Activated T-helper 1 cell treated with anti-CD3 and anti-CD28 coated beads, Interleukin-12 subunit alpha, Interleukin-12 subunit beta, Interleukin-2, Interleukin-4 antibody, amounts not matched to agents 30 ng/mL and 10 ng/mL and 1 ng/mL, durations not matched to agents 14 hours and 24 hours and 36 hours (primary cell): ENCODE measurements at regions of chr17 and their contacts with region 1.

Region 1: GRCh38 chr17:68205251-68205807 is 42.5 kb upstream of the AMZ2 start:
- DNase-seq: peak; percentile 90
- H3K4me3 Mint-ChIP-seq: peak overlapping the region; percentile 90
- H3K27ac Mint-ChIP-seq: peak overlapping the region; percentile 75
- H3K4me1 Mint-ChIP-seq: peaks cover 33% of the 10 kb centered on the region
- H3K27me3 Mint-ChIP-seq: peaks cover 12% of the 10 kb centered on the region

Region 2: DNA sequence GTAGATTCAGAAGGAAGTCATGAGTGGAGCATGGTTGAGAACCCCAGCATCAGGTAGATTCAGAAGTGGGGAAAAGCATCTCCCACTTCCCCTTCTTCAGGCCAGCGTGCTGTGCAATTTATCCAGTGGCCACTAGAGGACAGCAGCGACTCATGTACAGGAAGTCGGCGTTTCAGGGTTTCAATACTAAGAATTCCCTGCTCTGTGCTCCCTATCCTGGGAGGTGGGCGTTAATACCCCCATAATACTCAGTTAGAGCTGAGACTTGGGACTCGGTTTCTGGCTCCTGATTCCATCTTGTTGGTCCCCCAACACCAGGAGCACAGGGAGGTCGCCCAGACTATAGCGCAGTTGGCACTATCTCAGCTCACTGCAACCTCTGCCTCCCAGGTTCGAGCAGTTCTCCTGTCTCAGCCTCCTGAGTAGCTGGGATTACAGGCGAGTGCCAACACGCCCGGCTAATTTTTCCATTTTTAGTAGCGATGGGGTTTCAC is 32.8 kb before region 1 on chr17:
- intact Hi-C with region 1: loop called (anchors 1 kb)
- DNase-seq: peak; percentile 61
- H3K4me3 Mint-ChIP-seq: no peak overlapping the region
- H3K27ac Mint-ChIP-seq: no peak overlapping the region
- H3K4me1 Mint-ChIP-seq: peaks cover 31% of the 10 kb centered on the region
- H3K27me3 Mint-ChIP-seq: peaks cover 6% of the 10 kb centered on the region

Region 3: DNA sequence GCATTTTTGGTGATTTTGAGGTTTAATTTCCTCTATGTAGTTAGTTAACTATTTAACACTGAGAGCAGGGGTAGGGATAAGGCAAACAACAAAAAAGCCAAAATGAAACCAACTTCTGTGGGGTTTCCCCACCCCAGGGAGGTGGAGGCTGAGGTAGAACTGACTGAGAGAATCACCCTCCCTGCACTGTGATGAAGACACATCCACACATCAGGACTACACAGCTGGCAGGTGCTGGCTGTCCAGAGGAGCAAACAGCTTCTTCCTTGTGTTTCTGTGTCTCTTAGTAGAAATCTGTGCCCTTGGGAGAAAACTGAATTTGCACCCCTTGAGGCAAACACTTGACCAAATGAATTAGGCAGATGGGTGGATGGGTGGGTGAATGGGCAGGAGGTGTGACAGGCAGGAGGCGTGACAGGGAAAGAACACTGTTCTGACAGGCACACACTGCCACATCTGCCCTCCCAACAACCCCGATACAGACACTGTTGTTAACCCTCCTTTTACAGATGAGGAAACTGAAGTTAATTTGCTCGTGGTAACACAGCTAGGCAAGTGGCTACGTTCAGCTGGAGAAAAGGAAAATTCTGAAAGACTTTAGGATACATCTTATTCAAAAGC is 20.4 kb before region 1 on chr17:
- intact Hi-C with region 1: loop called (anchors 1 kb)
- DNase-seq: peak; percentile 70
- H3K4me3 Mint-ChIP-seq: peak overlapping the region; percentile 51
- H3K27ac Mint-ChIP-seq: peak overlapping the region; percentile 53
- H3K4me1 Mint-ChIP-seq: peaks cover 57% of the 10 kb centered on the region
- H3K27me3 Mint-ChIP-seq: peaks cover 10% of the 10 kb centered on the region

Region 4: DNA sequence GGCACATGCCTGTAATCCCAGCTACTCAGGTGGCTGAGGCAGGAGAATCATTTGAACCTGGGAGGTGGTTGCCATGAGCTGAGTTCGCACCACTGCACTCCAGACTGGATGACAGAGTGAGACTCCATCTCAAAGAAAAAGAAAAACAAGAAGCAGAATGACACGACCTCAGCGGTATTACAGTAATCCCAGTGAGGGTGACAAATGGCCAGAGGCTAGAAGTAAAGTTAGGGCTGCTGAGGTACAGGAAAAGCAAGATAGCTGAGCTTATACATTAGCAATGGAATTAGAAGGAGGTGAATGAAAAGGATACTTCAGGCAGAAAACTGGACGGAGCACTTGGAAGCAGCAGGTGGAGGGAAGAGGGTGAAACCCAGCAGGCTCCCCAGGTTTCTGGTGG is 16.4 kb after region 1 on chr17:
- intact Hi-C with region 1: no loop called
- DNase-seq: no peak
- H3K4me3 Mint-ChIP-seq: no peak overlapping the region
- H3K27ac Mint-ChIP-seq: no peak overlapping the region
- H3K4me1 Mint-ChIP-seq: no peaks in the 10 kb centered on the region
- H3K27me3 Mint-ChIP-seq: no peaks in the 10 kb centered on the region

Region 5: DNA sequence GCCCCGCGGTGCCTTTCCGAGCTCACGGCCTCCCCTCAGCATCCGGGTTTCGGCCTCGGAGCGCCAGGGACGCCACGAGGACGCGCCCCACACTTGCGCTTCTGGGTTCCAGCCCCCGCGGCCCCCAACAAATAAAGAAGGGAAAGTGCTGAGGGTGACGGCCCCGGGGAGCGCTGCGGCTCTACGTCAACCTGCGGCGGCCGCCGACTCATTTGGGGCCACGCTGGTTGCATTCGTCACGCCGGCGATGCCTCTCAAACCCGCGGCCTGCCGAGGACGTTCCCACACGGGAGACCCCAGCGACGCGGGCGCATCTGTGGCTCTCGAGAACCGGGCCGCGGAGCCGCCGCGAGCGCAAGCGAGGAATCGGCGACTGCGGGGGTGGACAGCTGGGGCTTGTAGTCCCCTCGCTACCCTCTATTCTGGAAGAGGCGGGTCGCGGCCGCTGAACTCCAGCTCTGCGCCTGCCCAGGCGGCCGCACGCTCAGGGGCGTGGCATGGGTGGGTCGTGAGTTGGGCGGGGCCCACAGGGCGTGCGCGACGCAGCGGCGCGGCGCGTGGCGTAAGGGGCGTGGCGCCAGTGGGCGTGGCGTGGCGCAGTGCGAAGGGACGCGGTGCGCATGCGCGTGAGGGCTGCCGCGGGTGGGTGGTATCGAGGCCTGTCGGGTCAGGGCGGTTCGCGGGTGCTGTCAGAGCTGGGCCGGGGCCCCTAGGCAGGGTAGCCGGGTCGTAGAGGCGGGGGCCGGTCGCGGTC is 42.3 kb after region 1 on chr17 and contains the start of gene AMZ2:
- intact Hi-C with region 1: loop called (anchors 2 kb)
- DNase-seq: peak; percentile 98
- H3K4me3 Mint-ChIP-seq: peak within 1 kb of the TSS; percentile 88
- H3K27ac Mint-ChIP-seq: peak within 1 kb of the TSS; percentile 96
- H3K4me1 Mint-ChIP-seq: peaks cover 49% of the 10 kb centered on the region
- H3K27me3 Mint-ChIP-seq: no peaks in the 10 kb centered on the region
- total RNA-seq, gene AMZ2: 67.3 and 75.7 TPM in 2 replicates

Region 6: DNA sequence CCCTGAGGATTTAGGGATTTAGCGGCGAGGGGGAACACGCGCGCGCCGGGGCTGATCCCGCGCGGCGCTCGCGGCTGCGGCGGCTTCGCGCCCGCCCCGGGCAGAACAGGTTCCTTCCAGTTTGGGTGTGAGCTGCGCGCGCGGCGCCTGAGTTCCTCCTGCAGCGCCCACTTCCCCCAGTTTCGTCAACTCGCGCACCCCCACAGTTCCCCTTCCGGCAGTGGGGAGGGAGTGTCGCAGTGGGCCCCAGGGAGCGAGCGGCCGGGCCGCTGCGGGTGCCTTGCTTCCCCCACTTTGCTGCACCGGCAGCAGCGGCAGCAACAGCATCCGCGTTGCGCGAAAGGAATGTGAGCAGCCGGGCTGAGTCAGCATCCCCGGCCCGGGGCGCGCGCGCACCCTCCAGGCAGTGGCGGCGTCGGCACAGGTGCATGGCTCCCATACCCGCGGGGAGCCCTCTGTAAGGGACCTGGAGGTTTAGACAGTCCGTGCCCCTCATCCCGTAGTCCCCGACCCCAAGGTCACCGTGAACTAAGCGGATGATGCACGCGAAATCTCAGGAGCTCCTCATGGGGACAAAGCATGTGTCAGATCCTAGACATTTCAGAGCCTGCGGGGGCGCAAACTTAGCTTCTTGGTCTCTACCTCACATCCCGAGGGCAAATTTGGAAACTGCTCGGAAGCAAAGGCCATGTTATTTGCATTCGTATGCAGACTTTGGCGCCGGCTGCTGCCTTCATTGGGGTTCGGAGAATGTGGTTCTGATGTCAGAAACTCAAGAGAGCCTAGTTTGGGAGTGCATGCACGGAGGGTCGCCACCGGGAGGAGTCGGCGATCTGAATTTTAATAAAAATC is 86.7 kb after region 1 on chr17:
- intact Hi-C with region 1: loop called (anchors 2 kb)
- DNase-seq: peak; percentile 90
- H3K4me3 Mint-ChIP-seq: peak overlapping the region; percentile 83
- H3K27ac Mint-ChIP-seq: peak overlapping the region; percentile 84
- H3K4me1 Mint-ChIP-seq: peaks cover 67% of the 10 kb centered on the region
- H3K27me3 Mint-ChIP-seq: peaks cover 8% of the 10 kb centered on the region

Region 7: GRCh38 chr17:68435876-68436842 is 230.8 kb after region 1 on chr17:
- intact Hi-C with region 1: loop called (anchors 1 kb)
- DNase-seq: peak; percentile 77
- H3K4me3 Mint-ChIP-seq: peak overlapping the region; percentile 64
- H3K27ac Mint-ChIP-seq: peak overlapping the region; percentile 91
- H3K4me1 Mint-ChIP-seq: peaks cover 64% of the 10 kb centered on the region
- H3K27me3 Mint-ChIP-seq: no peaks in the 10 kb centered on the region